ENCODE measurements at regions of chr11 and their contacts with region 1.

Region 1: DNA sequence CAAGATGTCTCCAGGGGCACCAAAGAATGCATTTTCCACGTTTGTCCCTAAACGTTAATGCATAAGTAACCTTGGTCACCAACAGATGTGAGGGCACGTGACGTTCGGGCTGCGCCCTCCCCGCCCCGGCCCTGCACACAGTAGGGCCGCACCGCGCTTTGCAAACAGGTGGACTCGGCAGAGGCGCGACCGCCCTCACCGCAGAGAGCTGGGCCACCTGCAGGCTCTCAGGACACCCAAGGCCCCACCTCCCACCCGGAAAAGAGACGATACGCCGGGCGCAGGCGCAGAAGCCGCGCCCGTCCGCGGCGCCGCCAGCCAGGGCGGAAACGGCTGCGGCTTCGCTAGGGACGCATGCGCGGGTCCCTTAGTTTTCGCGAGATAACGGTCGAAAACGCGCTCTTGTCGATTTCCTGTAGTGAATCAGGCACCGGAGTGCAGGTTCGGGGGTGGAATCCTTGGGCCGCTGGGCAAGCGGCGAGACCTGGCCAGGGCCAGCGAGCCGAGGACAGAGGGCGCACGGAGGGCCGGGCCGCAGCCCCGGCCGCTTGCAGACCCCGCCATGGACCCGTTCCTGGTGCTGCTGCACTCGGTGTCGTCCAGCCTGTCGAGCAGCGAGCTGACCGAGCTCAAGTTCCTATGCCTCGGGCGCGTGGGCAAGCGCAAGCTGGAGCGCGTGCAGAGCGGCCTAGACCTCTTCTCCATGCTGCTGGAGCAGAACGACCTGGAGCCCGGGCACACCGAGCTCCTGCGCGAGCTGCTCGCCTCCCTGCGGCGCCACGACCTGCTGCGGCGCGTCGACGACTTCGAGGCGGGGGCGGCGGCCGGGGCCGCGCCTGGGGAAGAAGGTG is at the start of gene FADD:
- DNase-seq: peak; percentile 94
- H3K4me3 ChIP-seq: peak within 1 kb of the TSS; percentile 77 to 95 (median 82)
- H3K27ac ChIP-seq: peak within 1 kb of the TSS; percentile 92 to 93 (median 92)
- H3K4me1 ChIP-seq: peaks cover 0 to 25% (median 21%) of the 10 kb centered on the region in 4 donors
- H3K27me3 ChIP-seq: no peaks in the 10 kb centered on the region
- CTCF ChIP-seq: no peak
- EP300 ChIP-seq: no peak
- POLR2A ChIP-seq: peak; percentile 46 to 65
- total RNA-seq, gene FADD: 11.5 to 24.1 (median 14.6) TPM

Region 2: DNA sequence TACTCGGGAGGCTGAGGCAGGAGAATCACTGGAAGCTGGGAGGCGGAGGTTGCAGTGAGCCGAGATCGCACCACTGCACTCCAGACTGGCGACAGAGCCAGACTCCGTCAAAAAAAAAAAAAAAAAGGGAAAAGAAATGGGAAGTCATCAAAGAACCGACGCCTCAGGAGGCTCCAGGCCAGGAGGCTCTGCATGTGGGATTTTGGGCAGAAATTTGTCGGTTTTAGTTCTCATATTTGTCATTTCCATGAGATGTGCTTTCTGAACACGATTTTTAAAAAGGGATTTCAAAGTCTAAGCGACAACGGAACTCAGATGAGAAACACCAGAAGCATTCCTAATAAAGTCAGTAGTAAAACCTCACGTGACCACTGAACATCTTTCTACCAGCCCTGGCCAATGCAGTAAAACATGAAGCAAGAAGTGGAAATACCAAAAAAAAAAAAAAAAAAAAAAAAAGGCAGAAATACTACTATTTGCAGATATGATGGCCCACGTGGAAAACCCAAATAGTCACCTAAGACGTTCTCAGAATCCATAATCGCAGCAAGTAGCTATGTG is 527.2 kb before region 1 on chr11:
- intact Hi-C with region 1: loop called (anchors 5 kb)
- DNase-seq: peak; percentile 12
- H3K4me3 ChIP-seq: peak overlapping the region; percentile 88 to 99 (median 96)
- H3K27ac ChIP-seq: peak overlapping the region; percentile 85 to 89 (median 89)
- H3K4me1 ChIP-seq: peaks cover 0 to 27% (median 23%) of the 10 kb centered on the region in 4 donors
- H3K27me3 ChIP-seq: no peaks in the 10 kb centered on the region
- CTCF ChIP-seq: no peak
- EP300 ChIP-seq: no peak
- POLR2A ChIP-seq: no peak

Region 3: DNA sequence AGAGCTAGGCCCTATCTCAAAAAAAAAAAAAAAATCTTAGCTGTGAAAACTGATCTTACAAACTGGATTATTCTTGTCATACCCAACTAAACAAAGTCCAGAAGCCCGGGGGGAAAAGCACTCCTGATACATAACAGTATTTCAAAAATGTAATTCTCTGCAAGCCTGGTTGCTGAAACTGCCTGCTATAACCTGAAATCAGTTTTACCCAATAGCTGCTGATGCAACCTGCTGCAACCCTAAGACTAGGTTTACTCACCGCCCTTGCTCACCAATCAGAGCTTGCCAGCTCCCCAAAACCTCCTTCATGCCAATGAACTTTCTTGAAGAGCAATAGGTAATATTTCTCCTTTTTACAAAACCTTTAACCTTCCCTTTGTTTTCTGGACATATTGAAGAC is 511.7 kb before region 1 on chr11:
- intact Hi-C with region 1: no loop called
- DNase-seq: peak; percentile 3
- H3K4me3 ChIP-seq: no peak overlapping the region
- H3K27ac ChIP-seq: no peak overlapping the region
- H3K4me1 ChIP-seq: no peaks in the 10 kb centered on the region
- H3K27me3 ChIP-seq: peaks cover 0 to 3% (median 0%) of the 10 kb centered on the region in 3 donors
- CTCF ChIP-seq: no peak
- EP300 ChIP-seq: no peak
- POLR2A ChIP-seq: no peak

Region 4: GRCh38 chr11:70005107-70005818 is 197.9 kb before region 1 on chr11:
- intact Hi-C with region 1: no loop called
- DNase-seq: no peak
- H3K4me3 ChIP-seq: no peak overlapping the region
- H3K27ac ChIP-seq: no peak overlapping the region
- H3K4me1 ChIP-seq: no peaks in the 10 kb centered on the region
- H3K27me3 ChIP-seq: peaks cover 0 to 4% (median 0%) of the 10 kb centered on the region in 3 donors
- CTCF ChIP-seq: no peak
- EP300 ChIP-seq: no peak
- POLR2A ChIP-seq: no peak